PC-3 (cell line): ENCODE measurements at regions of chr1 and their contacts with region 1.

Region 1: GRCh38 chr1:218123968-218124367 is 161.1 kb upstream of the RRP15 start:
- DNase-seq: no peak
- ATAC-seq: peak; percentile 24; the same call in 1 of the 2 replicates
- H3K4me3 ChIP-seq: no peak overlapping the region
- H3K27ac ChIP-seq: no peak overlapping the region
- H3K4me1 ChIP-seq: no peaks in the 10 kb centered on the region
- H3K27me3 ChIP-seq: no peaks in the 10 kb centered on the region
- CTCF ChIP-seq: no peak

Region 2: DNA sequence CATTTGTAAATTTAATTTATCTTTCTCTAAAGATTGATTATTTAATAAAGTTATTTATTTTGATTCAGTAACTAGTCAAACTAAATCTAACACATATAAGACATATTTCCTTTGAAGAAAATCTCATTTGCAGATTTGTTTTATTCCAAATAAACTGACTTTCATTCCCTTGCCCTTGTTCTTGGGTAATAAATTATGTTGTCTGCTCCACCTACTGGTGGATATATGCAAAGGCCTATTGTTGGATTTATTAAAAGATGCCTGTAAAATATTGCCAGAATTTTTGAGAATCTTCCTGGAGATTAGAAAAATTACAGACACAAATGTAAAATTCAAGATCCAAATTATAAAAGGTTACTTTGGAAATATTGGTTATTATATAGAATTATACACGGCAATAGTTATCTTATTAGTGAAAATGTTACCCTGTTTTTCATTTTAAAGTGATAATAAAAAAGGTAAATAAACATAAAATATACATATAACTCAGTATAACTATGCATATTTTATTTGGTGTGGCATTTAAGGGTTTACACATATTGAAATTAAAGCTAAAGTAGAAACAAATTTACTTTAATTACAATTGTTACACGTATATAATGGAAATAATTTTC is 376.7 kb before region 1 on chr1:
- CTCF ChIA-PET with region 1: no interaction called
- POLR2A ChIA-PET with region 1: no interaction called
- intact Hi-C with region 1: no loop called
- DNase-seq: peak; percentile 75
- ATAC-seq: no peak; the same call in 1 of the 2 replicates
- H3K4me3 ChIP-seq: no peak overlapping the region
- H3K27ac ChIP-seq: no peak overlapping the region
- H3K4me1 ChIP-seq: no peaks in the 10 kb centered on the region
- H3K27me3 ChIP-seq: no peaks in the 10 kb centered on the region
- CTCF ChIP-seq: peak; percentile 89

Region 3: GRCh38 chr1:218101409-218101808 is 22.6 kb before region 1 on chr1:
- CTCF ChIA-PET with region 1: no interaction called
- POLR2A ChIA-PET with region 1: no interaction called
- intact Hi-C with region 1: loop called (anchors 2 kb)
- DNase-seq: no peak
- ATAC-seq: no peak
- H3K4me3 ChIP-seq: no peak overlapping the region
- H3K27ac ChIP-seq: no peak overlapping the region
- H3K4me1 ChIP-seq: no peaks in the 10 kb centered on the region
- H3K27me3 ChIP-seq: no peaks in the 10 kb centered on the region
- CTCF ChIP-seq: no peak